WTC11 (cell line): ENCODE measurements at regions of chr5 and their contacts with region 1.

Region 1: DNA sequence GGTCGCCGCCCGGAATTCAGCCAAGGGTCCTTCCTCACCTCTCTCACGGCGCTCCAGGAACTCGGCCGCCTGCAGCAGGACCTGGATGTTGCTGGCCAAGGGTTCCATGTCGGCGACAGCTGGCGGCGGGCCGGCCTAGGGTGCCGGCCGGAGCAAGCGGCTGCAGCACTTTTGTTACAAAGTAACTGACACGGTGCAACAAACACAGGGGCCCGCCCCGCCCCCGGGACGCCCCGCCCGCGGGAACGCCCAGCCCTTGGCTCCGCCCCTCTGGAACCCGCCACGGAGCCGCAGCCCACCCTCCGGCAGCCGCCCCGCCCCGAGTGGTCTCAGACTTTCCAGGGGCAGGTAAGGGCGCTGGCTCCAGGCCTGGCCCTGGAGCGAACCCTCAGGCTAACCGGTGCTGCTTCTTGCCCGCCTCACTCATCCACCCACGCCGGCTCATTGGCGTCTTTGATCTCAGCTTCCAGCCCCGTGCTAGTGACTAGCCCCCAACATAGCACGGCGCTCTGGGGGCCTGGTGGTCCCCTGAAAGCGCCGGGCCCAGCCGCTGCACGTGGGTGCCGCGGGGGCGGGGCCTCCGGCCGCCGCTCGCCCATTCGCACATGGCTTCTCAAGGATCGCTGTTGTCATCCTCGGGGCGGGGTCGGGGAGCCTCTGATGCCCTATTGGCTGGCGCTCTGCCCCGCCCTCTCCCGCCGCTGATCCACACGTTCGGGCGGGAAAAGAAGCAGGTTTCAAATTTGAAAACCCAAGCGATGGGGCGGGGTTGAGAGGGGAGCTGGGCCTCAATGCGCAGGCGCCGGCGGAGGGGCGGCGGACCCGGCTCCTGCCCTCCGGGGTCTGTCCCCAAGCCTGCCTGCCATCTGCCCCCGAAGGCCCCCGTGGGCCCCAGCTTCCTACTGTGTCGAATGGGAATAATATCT is at the start of gene MXD3:
- DNase-seq: peak; percentile 99
- ATAC-seq: peak; percentile 71
- H3K4me3 Mint-ChIP-seq: peak within 1 kb of the TSS; percentile 84
- H3K27ac Mint-ChIP-seq: peak within 1 kb of the TSS; percentile 32; the same call in 1 of the 2 replicates
- H3K4me1 Mint-ChIP-seq: peaks cover 18% of the 10 kb centered on the region
- H3K27me3 Mint-ChIP-seq: no peaks in the 10 kb centered on the region
- CTCF ChIP-seq: no peak
- total RNA-seq, gene MXD3: 16.9 to 25.7 TPM (median 18.8 TPM) in 3 replicates

Region 2: GRCh38 chr5:176948458-176948857 is 363.5 kb before region 1 on chr5:
- CTCF ChIA-PET with region 1: no interaction called
- POLR2A ChIA-PET with region 1: no interaction called
- DNase-seq: no peak
- ATAC-seq: no peak
- H3K4me3 Mint-ChIP-seq: no peak overlapping the region
- H3K27ac Mint-ChIP-seq: no peak overlapping the region
- H3K4me1 Mint-ChIP-seq: peaks cover 43% of the 10 kb centered on the region
- H3K27me3 Mint-ChIP-seq: no peaks in the 10 kb centered on the region
- CTCF ChIP-seq: no peak

Region 3: DNA sequence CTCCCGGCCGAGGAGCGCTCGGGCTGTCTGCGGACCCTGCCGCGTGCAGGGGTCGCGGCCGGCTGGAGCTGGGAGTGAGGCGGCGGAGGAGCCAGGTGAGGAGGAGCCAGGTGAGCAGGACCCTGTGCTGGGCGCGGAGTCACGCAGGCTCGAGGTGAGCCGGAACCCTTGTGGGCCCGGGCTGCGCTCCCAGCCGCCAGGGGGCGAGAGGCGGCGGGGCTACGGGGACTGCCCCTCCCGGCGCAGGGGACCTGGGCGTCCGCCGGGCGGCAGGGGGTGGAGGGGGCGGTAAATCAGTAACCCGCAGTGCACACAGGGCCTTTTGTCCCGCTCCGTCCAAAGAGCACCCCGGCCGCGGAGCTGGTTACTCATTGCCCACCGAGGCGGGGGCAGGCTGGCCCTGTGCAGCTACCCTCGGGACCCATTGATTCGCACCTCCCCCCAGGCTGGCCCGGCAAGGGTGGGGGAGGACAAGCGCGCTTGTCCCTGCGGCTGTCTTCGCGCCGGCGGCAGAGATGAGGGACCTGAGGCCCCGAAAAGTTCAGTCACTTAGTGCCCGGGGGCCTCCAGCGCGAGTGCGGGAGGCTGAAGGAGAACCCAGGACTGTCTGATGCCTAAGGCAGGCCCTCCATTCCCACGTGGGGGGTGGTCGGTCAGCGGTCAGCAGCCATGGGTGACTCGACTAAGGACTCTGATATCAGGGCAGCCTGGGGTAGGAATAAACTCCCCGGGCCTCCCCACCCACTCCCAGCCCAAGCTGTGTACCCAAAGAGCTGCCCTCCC is 224.9 kb before region 1 on chr5:
- CTCF ChIA-PET with region 1: interaction called, 33 read pairs
- POLR2A ChIA-PET with region 1: no interaction called
- DNase-seq: peak; percentile 81
- ATAC-seq: peak; percentile 69
- H3K4me3 Mint-ChIP-seq: peak overlapping the region; percentile 80
- H3K27ac Mint-ChIP-seq: no peak overlapping the region
- H3K4me1 Mint-ChIP-seq: peaks cover 37% of the 10 kb centered on the region
- H3K27me3 Mint-ChIP-seq: no peaks in the 10 kb centered on the region; the same call in 1 of the 2 replicates
- CTCF ChIP-seq: peak; percentile 68; the same call in 1 of the 2 replicates

Region 4: DNA sequence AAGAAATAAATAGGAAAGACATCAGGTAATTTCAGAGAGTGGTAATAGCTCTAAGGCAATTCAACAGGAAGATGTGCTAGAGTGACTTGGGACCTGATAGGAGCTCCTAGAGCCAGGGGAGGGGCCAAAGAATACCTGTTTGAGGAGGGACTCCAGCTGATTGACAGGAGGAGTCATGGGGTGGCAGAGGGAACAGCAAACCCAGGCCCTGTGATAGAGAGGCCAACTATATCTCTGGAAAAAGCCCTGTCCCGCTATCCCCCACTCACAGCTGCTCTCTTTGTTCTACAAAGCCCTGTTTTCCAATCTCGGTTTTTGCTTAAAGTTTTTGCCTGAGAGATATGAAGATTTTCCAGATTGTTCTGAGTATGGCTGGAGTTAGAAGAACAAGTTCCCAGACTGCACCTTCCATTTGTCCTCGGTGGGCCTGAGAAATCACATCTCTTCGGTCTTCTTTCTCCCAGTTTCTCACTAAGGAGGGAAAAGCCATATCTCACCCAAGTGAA is 187.4 kb before region 1 on chr5:
- CTCF ChIA-PET with region 1: interaction called, 11 read pairs
- POLR2A ChIA-PET with region 1: no interaction called
- DNase-seq: peak; percentile 55
- ATAC-seq: peak; percentile 99
- H3K4me3 Mint-ChIP-seq: no peak overlapping the region
- H3K27ac Mint-ChIP-seq: peak overlapping the region; percentile 70; the same call in 1 of the 2 replicates
- H3K4me1 Mint-ChIP-seq: peaks cover 11% of the 10 kb centered on the region
- H3K27me3 Mint-ChIP-seq: peaks cover 5% of the 10 kb centered on the region; the same call in 1 of the 2 replicates
- CTCF ChIP-seq: no peak

Region 5: GRCh38 chr5:177336112-177336511 is 24.1 kb after region 1 on chr5:
- CTCF ChIA-PET with region 1: interaction called, 23 read pairs
- POLR2A ChIA-PET with region 1: no interaction called
- DNase-seq: no peak
- ATAC-seq: peak; percentile 5
- H3K4me3 Mint-ChIP-seq: no peak overlapping the region
- H3K27ac Mint-ChIP-seq: peak overlapping the region; percentile 97
- H3K4me1 Mint-ChIP-seq: peaks cover 41% of the 10 kb centered on the region
- H3K27me3 Mint-ChIP-seq: no peaks in the 10 kb centered on the region
- CTCF ChIP-seq: no peak

Region 6: GRCh38 chr5:177370488-177371119 is 58.6 kb after region 1 on chr5:
- CTCF ChIA-PET with region 1: interaction called, 76 read pairs
- POLR2A ChIA-PET with region 1: interaction called, 8 read pairs
- DNase-seq: peak; percentile 99
- ATAC-seq: peak; percentile 78
- H3K4me3 Mint-ChIP-seq: peak overlapping the region; percentile 49
- H3K27ac Mint-ChIP-seq: peak overlapping the region; percentile 76
- H3K4me1 Mint-ChIP-seq: peaks cover 56% of the 10 kb centered on the region
- H3K27me3 Mint-ChIP-seq: peaks cover 5% of the 10 kb centered on the region
- CTCF ChIP-seq: peak; percentile 45; the same call in 1 of the 2 replicates

Region 7: DNA sequence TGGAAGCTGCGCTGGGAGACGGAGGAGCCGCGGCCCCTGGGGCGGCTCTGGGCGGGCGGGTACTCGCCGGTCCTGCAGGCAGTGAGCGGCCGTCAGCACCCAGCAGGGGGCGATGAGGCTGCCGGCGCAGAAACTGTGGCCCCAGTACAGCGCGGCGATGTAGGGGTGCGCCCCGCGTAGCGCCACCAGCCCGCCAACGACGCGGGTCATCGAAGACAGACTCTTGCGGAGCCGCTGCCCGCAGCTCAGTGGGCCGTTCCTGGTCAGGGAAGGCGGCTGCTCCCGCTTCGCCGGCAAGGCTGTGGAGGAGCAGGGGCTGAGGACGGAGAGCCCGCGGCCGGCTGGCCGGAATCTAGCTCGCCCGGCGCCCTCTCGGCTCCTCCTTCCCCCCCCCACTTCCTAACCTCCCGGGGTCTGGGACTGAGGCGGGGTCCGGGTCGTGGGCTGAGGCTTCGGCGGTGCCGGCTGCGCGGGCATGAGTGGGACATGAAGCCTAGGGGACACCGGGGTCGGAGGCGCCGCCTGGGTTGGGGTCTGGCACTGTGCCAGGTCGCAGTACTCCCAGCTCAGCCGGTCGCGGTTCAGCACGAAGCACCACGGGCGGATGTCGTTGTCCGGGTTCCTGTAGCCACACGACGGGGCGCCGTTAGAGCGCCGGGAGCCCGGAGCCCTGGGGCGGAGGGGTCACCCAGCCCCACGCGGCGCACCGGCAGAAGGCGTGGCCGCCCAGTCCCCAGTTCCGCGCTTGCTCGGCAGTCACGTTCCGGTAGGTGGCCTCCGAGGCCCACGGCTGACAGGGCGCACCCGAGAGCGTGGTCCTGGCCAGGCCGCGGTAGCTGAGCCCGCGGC is 92.0 kb after region 1 on chr5:
- CTCF ChIA-PET with region 1: interaction called, 55 read pairs
- POLR2A ChIA-PET with region 1: interaction called, 3 read pairs
- DNase-seq: peak; percentile 75
- ATAC-seq: peak; percentile 26
- H3K4me3 Mint-ChIP-seq: peak overlapping the region; percentile 84
- H3K27ac Mint-ChIP-seq: no peak overlapping the region
- H3K4me1 Mint-ChIP-seq: peaks cover 9% of the 10 kb centered on the region
- H3K27me3 Mint-ChIP-seq: peaks cover 83% of the 10 kb centered on the region
- CTCF ChIP-seq: no peak

Region 8: DNA sequence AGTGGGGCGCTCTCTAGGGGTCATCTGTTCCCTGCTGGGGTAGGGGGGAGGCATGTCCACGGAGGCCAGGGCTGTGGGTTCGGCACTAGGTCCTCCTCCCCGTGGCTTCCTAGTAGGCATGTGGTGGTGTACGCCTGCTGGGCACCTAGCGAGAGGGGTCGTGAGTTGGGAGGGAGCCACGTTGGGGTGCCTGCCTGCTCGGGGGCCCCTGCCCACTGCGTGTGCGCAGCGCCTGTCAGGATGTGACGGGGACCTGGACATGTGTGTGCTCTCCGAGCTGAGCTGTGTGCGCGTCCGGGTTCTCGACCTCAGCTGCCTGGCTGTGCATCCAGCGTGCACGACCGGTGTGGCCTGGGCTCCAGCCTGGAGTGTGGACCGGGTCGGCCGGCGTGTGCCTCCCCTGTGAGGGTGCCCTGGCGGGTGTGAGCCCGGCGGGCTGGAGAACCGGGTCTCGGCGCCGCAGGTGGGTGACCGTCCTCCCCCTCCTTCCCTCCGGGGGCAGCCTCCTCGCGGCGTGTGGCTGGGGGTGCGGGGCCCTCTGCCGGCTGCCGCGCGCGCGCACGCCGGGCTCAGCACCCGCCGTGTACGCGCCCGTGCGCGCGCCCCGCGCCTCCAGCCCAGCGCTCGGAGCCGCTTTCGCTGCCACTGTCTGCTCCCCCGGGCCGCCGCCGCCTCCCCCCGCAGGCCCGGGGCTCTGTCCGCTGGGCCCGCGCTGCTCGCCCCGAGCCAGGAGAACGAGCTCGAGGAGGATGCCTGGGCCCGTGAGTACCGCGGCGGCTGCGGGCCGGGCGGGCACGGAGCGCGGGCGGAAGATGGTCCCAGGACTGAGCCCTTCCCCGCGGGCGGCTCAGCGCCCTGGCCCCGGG is 134.4 kb after region 1 on chr5 and contains the start of gene PRR7:
- CTCF ChIA-PET with region 1: interaction called, 91 read pairs
- POLR2A ChIA-PET with region 1: interaction called, 4 read pairs
- DNase-seq: peak; percentile 60
- ATAC-seq: peak; percentile 14
- H3K4me3 Mint-ChIP-seq: peak within 1 kb of the TSS; percentile 66
- H3K27ac Mint-ChIP-seq: no peak within 1 kb of the TSS
- H3K4me1 Mint-ChIP-seq: peaks cover 44% of the 10 kb centered on the region
- H3K27me3 Mint-ChIP-seq: peaks cover 41% of the 10 kb centered on the region
- CTCF ChIP-seq: no peak
- total RNA-seq, gene PRR7: 13.1 to 14.7 TPM (median 14.6 TPM) in 3 replicates